Left cardiac atrium (tissue), 4 donors: ENCODE measurements at regions of chr7 and their contacts with region 1.

Region 1: GRCh38 chr7:152336754-152337368 is 98.9 kb downstream of the KMT2C start:
- DNase-seq: no peak
- ATAC-seq: peak; percentile 69 to 71

Region 2: DNA sequence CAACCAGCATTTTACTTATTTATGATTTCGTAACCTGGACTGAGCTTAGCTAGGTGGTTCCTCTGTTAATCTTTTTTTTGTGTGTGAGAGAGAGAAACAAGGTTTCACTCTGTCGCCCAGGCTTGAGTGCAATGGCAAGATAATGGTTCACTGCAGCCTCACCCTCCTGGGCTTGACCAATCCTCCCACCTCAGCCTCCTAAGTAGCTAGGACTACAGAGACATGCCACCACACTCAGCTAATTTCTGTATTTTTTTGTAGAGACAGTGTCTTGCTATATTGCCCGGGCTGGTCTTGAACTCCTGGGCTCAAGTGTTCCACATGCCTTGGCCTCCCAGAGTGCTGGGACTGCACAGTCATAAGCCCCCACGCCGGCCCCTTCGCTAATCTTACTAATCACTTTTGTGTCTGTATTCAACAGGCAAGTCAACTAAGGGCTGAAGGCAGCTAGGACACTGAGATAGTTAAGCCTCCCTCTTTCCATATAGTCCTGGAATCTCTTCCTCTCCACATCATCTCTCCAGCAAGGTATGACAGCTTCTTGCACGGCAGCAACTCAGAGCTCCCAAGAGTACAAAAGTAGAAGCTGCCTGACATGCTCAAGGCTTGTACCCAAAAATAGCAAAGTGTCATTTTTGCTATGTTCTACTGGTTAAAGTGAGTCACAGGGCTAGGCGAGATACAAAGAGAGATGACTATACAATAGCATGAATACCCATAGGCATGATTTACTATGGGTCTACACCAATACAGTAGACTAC is 87.7 kb after region 1 on chr7:
- intact Hi-C with region 1: loop called in 1 of 2 experiments (anchors 10 kb)
- DNase-seq: no peak
- ATAC-seq: peak in 1 of 2 donors; percentile 70

Region 3: GRCh38 chr7:152709287-152710152 is 372.7 kb after region 1 on chr7:
- intact Hi-C with region 1: loop called in 1 of 2 experiments (anchors 5 kb)
- DNase-seq: no peak
- ATAC-seq: no peak